Aorta (tissue), 5 donors: ENCODE measurements at regions of chr15 and their contacts with region 1.

Region 1: DNA sequence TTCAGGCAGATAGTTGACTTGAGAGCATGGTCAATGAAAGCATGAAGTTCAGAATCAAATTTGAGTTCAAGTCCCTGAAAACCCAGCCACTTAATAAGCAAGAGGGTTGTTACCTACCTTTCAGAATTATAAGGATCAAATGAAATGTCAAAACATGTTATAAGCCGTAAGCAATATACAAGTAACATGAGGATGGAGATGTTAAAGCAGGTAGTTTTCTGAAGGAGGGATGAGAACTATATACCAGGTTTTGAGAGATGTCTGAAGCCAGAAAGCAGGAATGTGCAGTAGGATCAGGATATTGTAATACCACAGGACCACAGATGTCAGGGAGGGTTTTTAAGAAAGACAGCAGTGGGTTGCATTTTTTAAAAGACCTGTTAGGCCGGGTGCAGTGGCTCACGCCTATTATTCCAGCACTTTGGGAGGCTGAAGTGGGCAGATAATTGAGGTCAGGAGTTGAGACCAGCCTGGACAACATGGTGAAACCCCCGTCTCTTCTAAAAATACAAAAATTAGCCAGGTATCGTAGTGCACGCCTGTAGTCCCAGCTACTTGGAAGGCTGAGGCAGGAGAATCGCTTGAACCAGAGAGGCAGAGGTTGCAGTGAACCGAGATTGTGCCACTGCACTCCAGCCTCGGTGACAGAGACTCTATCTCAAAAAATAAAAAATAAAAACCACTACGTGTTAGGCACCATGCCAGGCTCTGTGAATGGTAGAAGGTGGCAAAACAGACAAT is 6.9 kb upstream of the EIF3J start:
- DNase-seq: no peak
- ATAC-seq: no peak
- H3K4me3 ChIP-seq: no peak overlapping the region
- H3K27ac ChIP-seq: no peak overlapping the region
- H3K4me1 ChIP-seq: peaks cover 0 to 2% of the 10 kb centered on the region in 2 donors
- H3K27me3 ChIP-seq: no peaks in the 10 kb centered on the region

Region 2: GRCh38 chr15:44435893-44436667 is 94.0 kb before region 1 on chr15:
- intact Hi-C with region 1: loop called in 1 of 2 experiments (anchors 5 kb)
- DNase-seq: no peak
- ATAC-seq: no peak
- H3K4me3 ChIP-seq: no peak overlapping the region
- H3K27ac ChIP-seq: no peak overlapping the region
- H3K4me1 ChIP-seq: no peaks in the 10 kb centered on the region
- H3K27me3 ChIP-seq: no peaks in the 10 kb centered on the region

Region 3: DNA sequence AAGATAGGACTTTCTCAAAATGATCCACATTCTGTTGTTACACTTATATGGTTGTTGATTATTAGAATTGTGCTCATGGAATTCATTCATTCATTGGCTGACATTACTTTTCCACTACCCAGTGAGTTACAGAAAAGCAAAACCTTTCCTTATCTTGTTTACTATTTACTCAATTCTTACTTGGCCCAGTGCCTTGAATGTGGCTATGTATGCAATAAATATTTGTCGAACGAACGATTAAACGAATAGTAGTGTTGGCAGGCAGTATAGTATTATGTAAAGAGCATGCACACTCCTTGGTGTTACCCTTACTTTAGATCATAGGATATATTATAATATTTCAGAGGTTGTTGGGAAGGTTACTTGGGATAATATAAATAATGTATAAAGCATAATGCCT is 71.6 kb before region 1 on chr15:
- intact Hi-C with region 1: no loop called
- DNase-seq: no peak
- ATAC-seq: no peak
- H3K4me3 ChIP-seq: no peak overlapping the region
- H3K27ac ChIP-seq: no peak overlapping the region
- H3K4me1 ChIP-seq: no peaks in the 10 kb centered on the region
- H3K27me3 ChIP-seq: no peaks in the 10 kb centered on the region